Natural killer cell (primary cell): ENCODE measurements at regions of chr7 and their contacts with region 1.

Region 1: DNA sequence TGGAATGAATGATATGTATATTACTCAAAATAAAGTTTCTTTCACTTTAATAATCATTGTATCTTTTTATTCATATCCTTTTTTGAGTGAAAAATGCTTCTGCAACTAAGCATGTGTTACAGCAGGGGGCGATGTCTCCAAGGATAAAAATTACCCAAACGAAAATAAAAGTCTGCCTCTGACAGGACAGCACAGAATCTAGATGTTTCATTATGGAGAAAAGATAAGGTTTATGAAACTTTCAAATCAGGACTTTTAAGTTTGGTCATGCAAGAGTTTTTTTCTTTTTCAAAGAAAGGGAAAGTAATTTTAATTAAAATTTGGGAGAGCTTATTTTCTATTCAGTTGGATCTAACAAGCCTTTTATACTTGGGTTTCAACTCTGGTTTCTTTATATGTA is 48.4 kb downstream of the TES start:
- DNase-seq: peak in 1 of 2 donors; percentile 73
- ATAC-seq: peak; percentile 66 to 80 (median 75)
- H3K4me3 ChIP-seq: no peak overlapping the region
- H3K4me3 Mint-ChIP-seq: no peak overlapping the region
- H3K27ac ChIP-seq: no peak overlapping the region
- H3K27ac Mint-ChIP-seq: peak overlapping the region; percentile 66 to 73
- H3K4me1 ChIP-seq: no peaks in the 10 kb centered on the region
- H3K4me1 Mint-ChIP-seq: peaks cover 34 to 37% of the 10 kb centered on the region in 2 donors
- H3K27me3 ChIP-seq: no peaks in the 10 kb centered on the region
- H3K27me3 Mint-ChIP-seq: no peaks in the 10 kb centered on the region
- CTCF ChIP-seq: peak; percentile 75

Region 2: GRCh38 chr7:116525913-116526861 is 267.5 kb after region 1 on chr7:
- intact Hi-C with region 1: loop called (anchors 2 kb)
- DNase-seq: peak; percentile 50 to 78
- ATAC-seq: peak; percentile 86 to 93 (median 89)
- H3K4me3 ChIP-seq: peak overlapping the region; percentile 45
- H3K4me3 Mint-ChIP-seq: peak overlapping the region; percentile 85
- H3K27ac ChIP-seq: no peak overlapping the region
- H3K27ac Mint-ChIP-seq: peak overlapping the region in 1 of 2 donors; percentile 71
- H3K4me1 ChIP-seq: peaks cover 25% of the 10 kb centered on the region
- H3K4me1 Mint-ChIP-seq: peaks cover 14 to 25% of the 10 kb centered on the region in 2 donors
- H3K27me3 ChIP-seq: peaks cover 46% of the 10 kb centered on the region
- H3K27me3 Mint-ChIP-seq: peaks cover 55 to 80% of the 10 kb centered on the region in 2 donors
- CTCF ChIP-seq: peak; percentile 76

Region 3: DNA sequence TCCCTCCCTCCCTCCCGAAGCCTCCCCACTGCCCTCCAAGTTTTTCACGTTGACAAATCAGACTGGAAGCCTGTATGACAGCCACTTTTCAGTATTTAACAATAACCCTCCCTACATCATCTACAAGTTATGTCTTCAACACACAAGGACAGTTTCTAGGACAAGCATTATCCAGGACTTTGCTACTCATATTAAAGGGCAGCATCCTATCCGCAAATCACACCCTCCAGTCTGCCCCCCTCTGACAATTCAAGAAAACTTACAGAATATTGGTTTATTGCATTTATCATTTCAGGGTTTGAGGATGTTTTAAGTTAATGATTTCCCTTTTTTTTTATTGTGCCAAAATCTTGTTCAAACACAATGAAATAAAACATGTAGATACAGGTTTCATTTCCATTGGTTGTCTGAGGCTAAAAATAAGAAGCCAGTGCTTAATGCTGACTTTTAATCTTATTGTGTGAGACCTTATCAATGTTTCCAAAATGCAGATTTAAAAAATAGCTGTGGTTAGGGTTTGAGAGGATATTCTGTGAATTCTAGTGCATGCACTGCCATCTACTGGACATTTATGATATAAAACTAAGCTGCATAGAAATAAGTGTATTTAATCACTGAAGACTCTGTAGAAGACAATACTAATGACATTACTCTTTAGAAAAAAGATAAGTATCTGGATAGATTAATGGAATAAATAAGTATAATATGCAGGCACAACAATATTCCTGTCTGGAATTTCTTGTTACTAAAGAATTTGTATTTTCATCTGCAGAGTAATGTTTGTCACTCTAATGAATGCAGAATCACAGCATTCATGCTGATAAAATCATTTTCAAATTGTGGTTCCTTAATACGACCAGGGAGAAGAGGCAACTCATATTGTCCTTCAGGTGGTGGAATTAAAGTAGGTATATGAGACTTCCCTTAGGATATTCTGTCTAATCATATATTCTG is 330.2 kb after region 1 on chr7:
- intact Hi-C with region 1: loop called (anchors 1 kb)
- DNase-seq: peak in 1 of 2 donors; percentile 67
- ATAC-seq: peak; percentile 53 to 66 (median 57)
- H3K4me3 ChIP-seq: no peak overlapping the region
- H3K4me3 Mint-ChIP-seq: no peak overlapping the region
- H3K27ac ChIP-seq: no peak overlapping the region
- H3K27ac Mint-ChIP-seq: no peak overlapping the region
- H3K4me1 ChIP-seq: peaks cover 7% of the 10 kb centered on the region
- H3K4me1 Mint-ChIP-seq: peaks cover 18 to 22% of the 10 kb centered on the region in 2 donors
- H3K27me3 ChIP-seq: peaks cover 7% of the 10 kb centered on the region
- H3K27me3 Mint-ChIP-seq: peaks cover 19 to 39% of the 10 kb centered on the region in 2 donors
- CTCF ChIP-seq: peak; percentile 88

Region 4: GRCh38 chr7:116809636-116810266 is 551.0 kb after region 1 on chr7:
- intact Hi-C with region 1: loop called (anchors 10 kb)
- DNase-seq: peak in 1 of 2 donors; percentile 66
- ATAC-seq: peak in 2 of 3 donors; percentile 48 to 52
- H3K4me3 ChIP-seq: no peak overlapping the region
- H3K4me3 Mint-ChIP-seq: no peak overlapping the region
- H3K27ac ChIP-seq: no peak overlapping the region
- H3K27ac Mint-ChIP-seq: no peak overlapping the region
- H3K4me1 ChIP-seq: no peaks in the 10 kb centered on the region
- H3K4me1 Mint-ChIP-seq: no peaks in the 10 kb centered on the region
- H3K27me3 ChIP-seq: no peaks in the 10 kb centered on the region
- H3K27me3 Mint-ChIP-seq: no peaks in the 10 kb centered on the region
- CTCF ChIP-seq: peak; percentile 52